ENCODE measurements at regions of chr12 and their contacts with region 1.

Region 1: GRCh38 chr12:99386907-99387306 is 260.6 kb upstream of the GARIN6 start:
- DNase-seq: no peak
- H3K4me3 ChIP-seq: no peak overlapping the region
- H3K27ac ChIP-seq: no peak overlapping the region
- H3K4me1 ChIP-seq: no peaks in the 10 kb centered on the region; a peak in 1 of 7 replicates
- H3K27me3 ChIP-seq: no peaks in the 10 kb centered on the region
- CTCF ChIP-seq: peak in 2 of 3 experiments; percentile 36 to 59; a peak in 2 of 4 replicates
- EP300 ChIP-seq: no peak
- POLR2A ChIP-seq: no peak
- RAD21 ChIP-seq: peak; percentile 67 to 69

Region 2: GRCh38 chr12:99611117-99611516 is 224.2 kb after region 1 on chr12:
- CTCF ChIA-PET with region 1: interaction called, 102 read pairs
- POLR2A ChIA-PET with region 1: no interaction called
- DNase-seq: no peak
- H3K4me3 ChIP-seq: no peak overlapping the region
- H3K27ac ChIP-seq: no peak overlapping the region
- H3K4me1 ChIP-seq: peaks cover 0 to 13% (median 4%) of the 10 kb centered on the region in 4 experiments; a peak in 5 of 7 replicates
- H3K27me3 ChIP-seq: peaks cover 0 to 4% (median 0%) of the 10 kb centered on the region in 4 experiments; a peak in 2 of 7 replicates
- CTCF ChIP-seq: no peak
- EP300 ChIP-seq: no peak
- POLR2A ChIP-seq: no peak
- RAD21 ChIP-seq: no peak

Region 3: GRCh38 chr12:99619389-99620158 is 232.7 kb after region 1 on chr12:
- CTCF ChIA-PET with region 1: interaction called, 102 read pairs
- POLR2A ChIA-PET with region 1: no interaction called
- DNase-seq: peak in 1 of 2 experiments; percentile 56
- H3K4me3 ChIP-seq: no peak overlapping the region
- H3K27ac ChIP-seq: 0 out of 2 replicates have a peak overlapping the region, but pooled peaks have one; percentile 7
- H3K4me1 ChIP-seq: no peaks in the 10 kb centered on the region
- H3K27me3 ChIP-seq: no peaks in the 10 kb centered on the region
- CTCF ChIP-seq: peak; percentile 53 to 88 (median 85)
- EP300 ChIP-seq: no peak
- POLR2A ChIP-seq: no peak
- RAD21 ChIP-seq: peak; percentile 90 to 92

Region 4: DNA sequence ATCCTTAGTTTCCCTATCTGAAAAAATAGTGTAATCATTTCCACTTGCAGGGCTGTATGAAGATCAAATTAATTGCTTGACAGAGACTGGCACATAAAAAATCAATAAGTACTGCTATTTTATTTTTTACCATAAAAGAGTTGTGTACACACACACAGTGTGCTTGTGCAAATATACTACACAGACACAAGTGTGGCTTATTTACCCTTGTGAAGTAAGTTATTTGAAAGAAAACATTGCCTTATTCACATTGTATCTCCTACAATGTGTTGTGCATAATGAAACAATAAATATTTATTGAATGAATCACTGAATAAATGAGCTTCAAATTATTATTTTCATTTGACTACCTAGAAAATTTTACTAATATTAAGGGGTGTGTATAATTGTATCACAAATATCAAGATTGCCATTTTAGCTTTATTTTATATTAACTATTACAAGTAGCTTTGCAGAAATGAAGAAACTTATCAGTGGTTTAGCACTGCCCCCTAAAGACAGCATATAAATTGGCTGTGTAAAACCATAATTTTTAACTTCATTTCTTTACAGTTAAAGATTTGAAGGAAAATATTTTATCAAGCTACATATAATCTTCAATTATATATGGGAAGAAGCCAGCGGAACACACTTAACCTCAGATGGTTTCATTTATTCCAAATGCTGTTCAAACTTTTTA is 271.9 kb after region 1 on chr12:
- CTCF ChIA-PET with region 1: interaction called, 32 read pairs
- POLR2A ChIA-PET with region 1: no interaction called
- DNase-seq: no peak
- H3K4me3 ChIP-seq: no peak overlapping the region
- H3K27ac ChIP-seq: no peak overlapping the region
- H3K4me1 ChIP-seq: no peaks in the 10 kb centered on the region
- H3K27me3 ChIP-seq: no peaks in the 10 kb centered on the region
- CTCF ChIP-seq: peak in 1 of 3 experiments; percentile 16; a peak in 2 of 4 replicates
- EP300 ChIP-seq: no peak
- POLR2A ChIP-seq: no peak
- RAD21 ChIP-seq: peak in 1 of 2 experiments; percentile 49; a peak in 3 of 4 replicates

Region 5: GRCh38 chr12:99767809-99768208 is 380.9 kb after region 1 on chr12:
- CTCF ChIA-PET with region 1: interaction called, 36 read pairs
- POLR2A ChIA-PET with region 1: no interaction called
- DNase-seq: no peak
- H3K4me3 ChIP-seq: no peak overlapping the region
- H3K27ac ChIP-seq: no peak overlapping the region
- H3K4me1 ChIP-seq: no peaks in the 10 kb centered on the region
- H3K27me3 ChIP-seq: no peaks in the 10 kb centered on the region
- CTCF ChIP-seq: peak in 2 of 3 experiments; percentile 20 to 24; a peak in 2 of 4 replicates
- EP300 ChIP-seq: no peak
- POLR2A ChIP-seq: no peak
- RAD21 ChIP-seq: peak in 1 of 2 experiments; percentile 47; a peak in 3 of 4 replicates

Measured in H1 (cell line).